ENCODE measurements at regions of chr2 and their contacts with region 1.

Region 1: GRCh38 chr2:29309090-29310029 is 194.1 kb downstream of the CLIP4 start:
- DNase-seq: peak; percentile 66
- ATAC-seq: peak; percentile 91
- H3K4me3 Mint-ChIP-seq: no peak overlapping the region
- H3K27ac Mint-ChIP-seq: no peak overlapping the region
- H3K4me1 Mint-ChIP-seq: peaks cover 2% of the 10 kb centered on the region
- H3K27me3 Mint-ChIP-seq: peaks cover 34% of the 10 kb centered on the region

Region 2: GRCh38 chr2:29398384-29399237 is 89.3 kb after region 1 on chr2:
- CTCF ChIA-PET with region 1: no interaction called
- POLR2A ChIA-PET with region 1: no interaction called
- intact Hi-C with region 1: no loop called
- DNase-seq: no peak
- ATAC-seq: no peak
- H3K4me3 Mint-ChIP-seq: no peak overlapping the region
- H3K27ac Mint-ChIP-seq: no peak overlapping the region
- H3K4me1 Mint-ChIP-seq: no peaks in the 10 kb centered on the region
- H3K27me3 Mint-ChIP-seq: peaks cover 12% of the 10 kb centered on the region

Region 3: DNA sequence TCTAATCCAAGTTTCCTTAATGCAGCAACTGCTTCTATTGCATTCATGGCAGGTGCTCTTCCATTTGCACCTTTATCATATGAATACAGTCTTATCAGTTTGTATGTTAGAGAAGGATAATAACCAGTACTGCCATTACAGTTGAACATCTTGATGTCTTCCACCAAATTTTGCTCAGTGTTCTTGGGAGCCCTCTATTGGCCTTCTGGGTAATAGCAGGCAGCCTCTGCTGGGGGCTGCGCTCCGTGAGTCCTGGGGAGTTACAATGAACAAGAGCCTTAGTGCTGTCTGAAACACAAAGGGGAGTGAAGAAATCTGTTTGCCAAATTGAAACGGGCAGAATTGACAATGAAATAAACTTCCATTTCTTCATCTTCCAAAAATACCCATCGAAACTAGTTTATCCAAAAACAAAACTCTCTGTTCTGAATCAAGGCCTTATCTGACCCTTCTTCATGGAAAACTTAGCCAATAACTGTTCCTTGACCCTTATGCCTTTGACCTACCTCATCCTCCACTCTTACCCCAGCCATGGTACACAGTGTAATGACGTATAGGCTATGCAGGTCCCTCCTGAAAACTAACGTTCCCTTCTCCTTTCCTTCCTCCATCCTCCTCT is 532.1 kb after region 1 on chr2:
- CTCF ChIA-PET with region 1: no interaction called
- POLR2A ChIA-PET with region 1: no interaction called
- intact Hi-C with region 1: loop called (anchors 5 kb)
- DNase-seq: peak; percentile 36
- ATAC-seq: no peak
- H3K4me3 Mint-ChIP-seq: no peak overlapping the region
- H3K27ac Mint-ChIP-seq: no peak overlapping the region
- H3K4me1 Mint-ChIP-seq: no peaks in the 10 kb centered on the region
- H3K27me3 Mint-ChIP-seq: peaks cover 4% of the 10 kb centered on the region

Region 4: GRCh38 chr2:30072250-30072842 is 763.0 kb after region 1 on chr2:
- CTCF ChIA-PET with region 1: interaction called, 9 read pairs
- POLR2A ChIA-PET with region 1: no interaction called
- intact Hi-C with region 1: loop called in 1 of 2 experiments (anchors 1 kb)
- DNase-seq: peak; percentile 83
- ATAC-seq: peak; percentile 92
- H3K4me3 Mint-ChIP-seq: no peak overlapping the region
- H3K27ac Mint-ChIP-seq: no peak overlapping the region
- H3K4me1 Mint-ChIP-seq: no peaks in the 10 kb centered on the region
- H3K27me3 Mint-ChIP-seq: peaks cover 25% of the 10 kb centered on the region

Measured in activated CD4-positive, alpha-beta T cell treated with anti-CD3 and anti-CD28 coated beads for 36 hours (primary cell).